Sigmoid colon (tissue), 7 donors: ENCODE measurements at regions of chr12 and their contacts with region 1.

Region 1: DNA sequence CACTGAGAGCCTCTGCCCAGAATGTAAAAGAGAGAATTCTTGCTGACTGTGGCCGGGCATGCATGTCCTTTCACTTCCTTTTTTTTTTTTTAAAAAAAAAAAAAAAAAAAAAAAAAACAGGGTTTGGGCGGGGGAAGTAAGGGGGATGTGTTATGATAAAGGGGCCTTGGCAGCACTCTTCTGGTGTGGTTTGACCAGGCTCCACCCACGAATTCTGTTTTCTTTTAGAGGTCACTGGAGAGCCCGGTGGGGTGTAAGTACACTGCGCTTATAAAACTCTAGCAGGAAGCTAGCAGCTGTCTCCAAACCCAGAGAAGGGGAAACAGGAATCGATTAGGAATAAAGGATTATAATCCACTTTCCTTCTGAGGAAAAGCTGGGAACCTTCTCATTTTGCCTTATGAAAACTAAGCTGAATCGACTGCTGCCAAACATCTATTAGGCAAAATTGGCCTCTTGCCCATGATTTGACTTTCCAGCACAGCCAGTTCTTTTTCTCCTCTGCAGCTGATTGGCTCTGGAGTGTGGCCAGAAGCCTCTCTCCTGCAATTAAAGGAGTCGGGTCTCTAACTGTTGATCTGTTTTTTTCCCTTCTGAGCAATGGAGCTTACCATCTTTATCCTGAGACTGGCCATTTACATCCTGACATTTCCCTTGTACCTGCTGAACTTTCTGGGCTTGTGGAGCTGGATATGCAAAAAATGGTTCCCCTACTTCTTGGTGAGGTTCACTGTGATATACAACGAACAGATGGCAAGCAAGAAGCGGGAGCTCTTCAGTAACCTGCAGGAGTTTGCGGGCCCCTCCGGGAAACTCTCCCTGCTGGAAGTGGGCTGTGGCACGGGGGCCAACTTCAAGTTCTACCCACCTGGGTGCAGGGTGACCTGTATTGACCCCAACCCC is 27.7 kb upstream of the HIGD1C start:
- DNase-seq: peak; percentile 98
- H3K4me3 ChIP-seq: peak overlapping the region; percentile 64 to 80 (median 72)
- H3K27ac ChIP-seq: peak overlapping the region; percentile 87 to 93 (median 90)
- H3K4me1 ChIP-seq: peaks cover 0 to 58% (median 51%) of the 10 kb centered on the region in 4 donors
- H3K27me3 ChIP-seq: no peaks in the 10 kb centered on the region
- CTCF ChIP-seq: no peak
- EP300 ChIP-seq: peak in 3 of 4 donors; percentile 4 to 48 (median 28)
- POLR2A ChIP-seq: peak; percentile 16 to 35

Region 2: GRCh38 chr12:50763639-50764285 is 160.9 kb before region 1 on chr12 and contains the start of gene ATF1:
- intact Hi-C with region 1: loop called (anchors 2 kb)
- DNase-seq: peak; percentile 96
- H3K4me3 ChIP-seq: peak within 1 kb of the TSS; percentile 95 to 99 (median 99)
- H3K27ac ChIP-seq: peak within 1 kb of the TSS; percentile 96 to 100 (median 99)
- H3K4me1 ChIP-seq: peaks cover 0 to 38% (median 33%) of the 10 kb centered on the region in 4 donors
- H3K27me3 ChIP-seq: no peaks in the 10 kb centered on the region
- CTCF ChIP-seq: no peak
- EP300 ChIP-seq: no peak
- POLR2A ChIP-seq: peak; percentile 68 to 71
- total RNA-seq, gene ATF1: 12.6 to 27.6 (median 20.8) TPM

Region 3: GRCh38 chr12:50799908-50800307 is 124.8 kb before region 1 on chr12:
- intact Hi-C with region 1: no loop called
- DNase-seq: no peak
- H3K4me3 ChIP-seq: no peak overlapping the region
- H3K27ac ChIP-seq: no peak overlapping the region
- H3K4me1 ChIP-seq: no peaks in the 10 kb centered on the region
- H3K27me3 ChIP-seq: no peaks in the 10 kb centered on the region
- CTCF ChIP-seq: no peak
- EP300 ChIP-seq: no peak
- POLR2A ChIP-seq: no peak

Region 4: DNA sequence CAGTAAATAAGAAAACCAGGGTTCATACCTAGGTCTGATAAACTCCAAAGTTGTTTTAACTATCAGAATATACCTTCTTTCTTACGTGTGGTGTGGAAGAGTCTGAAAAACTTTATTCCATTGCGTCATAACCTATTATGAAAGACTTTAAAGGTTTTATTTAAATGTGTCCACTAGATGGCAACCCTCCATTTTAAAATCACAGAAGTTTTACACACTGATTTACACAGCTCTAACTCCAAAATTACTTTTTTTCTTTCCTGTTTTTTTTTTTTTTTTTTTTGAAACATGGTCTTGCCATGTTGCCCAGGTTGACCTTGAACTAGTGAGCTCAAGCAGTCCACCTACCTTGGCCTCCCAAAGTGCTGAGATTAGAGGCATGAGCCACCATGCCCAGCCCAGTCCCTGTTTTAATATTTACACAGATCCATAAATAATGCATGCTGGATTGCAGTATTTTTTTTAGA is 99.3 kb before region 1 on chr12:
- intact Hi-C with region 1: loop called (anchors 2 kb)
- DNase-seq: no peak
- H3K4me3 ChIP-seq: no peak overlapping the region
- H3K27ac ChIP-seq: peak overlapping the region; percentile 50 to 71 (median 66)
- H3K4me1 ChIP-seq: peaks cover 0 to 14% (median 9%) of the 10 kb centered on the region in 4 donors
- H3K27me3 ChIP-seq: no peaks in the 10 kb centered on the region
- CTCF ChIP-seq: peak; percentile 38 to 64 (median 49)
- EP300 ChIP-seq: no peak
- POLR2A ChIP-seq: no peak

Region 5: GRCh38 chr12:50986966-50987737 is 62.5 kb after region 1 on chr12:
- intact Hi-C with region 1: loop called (anchors 1 kb)
- DNase-seq: peak; percentile 71
- H3K4me3 ChIP-seq: no peak overlapping the region
- H3K27ac ChIP-seq: peak overlapping the region; percentile 59 to 83 (median 76)
- H3K4me1 ChIP-seq: peaks cover 0 to 33% (median 27%) of the 10 kb centered on the region in 4 donors
- H3K27me3 ChIP-seq: no peaks in the 10 kb centered on the region
- CTCF ChIP-seq: peak; percentile 28 to 64 (median 54)
- EP300 ChIP-seq: no peak
- POLR2A ChIP-seq: no peak

Region 6: GRCh38 chr12:51025836-51026638 is 101.3 kb after region 1 on chr12 and contains the start of gene SLC11A2:
- intact Hi-C with region 1: loop called (anchors 5 kb)
- DNase-seq: peak; percentile 98
- H3K4me3 ChIP-seq: peak within 1 kb of the TSS; percentile 80 to 87 (median 82)
- H3K27ac ChIP-seq: peak within 1 kb of the TSS; percentile 88 to 95 (median 92)
- H3K4me1 ChIP-seq: peaks cover 0 to 39% (median 14%) of the 10 kb centered on the region in 4 donors
- H3K27me3 ChIP-seq: no peaks in the 10 kb centered on the region
- CTCF ChIP-seq: peak in 2 of 4 experiments; percentile 17
- EP300 ChIP-seq: no peak
- POLR2A ChIP-seq: peak; percentile 29 to 58
- total RNA-seq, gene SLC11A2: 25.0 to 44.6 (median 37.1) TPM

Region 7: DNA sequence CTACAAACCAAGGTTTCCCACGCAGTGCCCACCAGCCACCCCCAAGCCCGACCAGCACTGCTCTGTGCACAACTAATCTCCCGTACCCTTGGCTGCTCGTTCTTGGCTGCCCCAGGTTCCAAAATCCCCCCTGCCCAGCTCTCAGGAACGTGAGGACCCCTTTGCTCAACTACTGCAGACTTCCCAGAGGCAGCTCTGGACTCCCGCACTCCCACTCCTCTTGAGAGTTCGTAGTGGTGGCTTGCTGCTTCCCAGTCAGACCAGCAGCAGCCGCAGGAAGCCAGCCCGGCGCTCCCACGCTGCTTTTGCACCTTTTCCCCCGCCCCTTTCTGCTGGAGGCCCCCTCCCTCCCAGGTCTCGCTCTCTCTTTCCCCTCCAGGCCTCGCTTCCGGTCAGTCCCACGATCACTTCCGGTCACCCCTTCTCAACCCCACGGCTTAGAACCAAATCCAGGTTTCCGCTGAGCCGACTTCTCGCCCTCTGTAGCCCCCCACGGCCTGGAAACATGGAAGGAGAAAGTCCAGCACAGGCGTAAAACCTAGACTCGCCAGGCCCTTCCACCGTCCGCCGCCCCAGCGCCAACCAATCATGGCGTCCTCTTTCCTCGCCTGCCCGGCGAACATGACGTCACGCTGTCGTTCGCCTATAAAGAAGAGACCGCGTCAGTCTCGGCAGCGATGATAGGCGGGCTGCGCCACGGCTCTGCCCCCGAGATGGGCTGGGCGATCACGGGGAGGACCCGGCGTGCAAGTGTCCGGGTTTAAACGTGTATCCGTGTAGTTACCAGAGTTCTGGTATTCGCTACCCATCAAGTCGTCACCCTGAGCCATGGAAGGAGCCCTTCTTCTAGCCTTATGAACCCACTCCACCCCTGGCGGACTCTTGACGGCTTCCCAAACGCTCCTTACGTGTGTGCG is 248.1 kb after region 1 on chr12 and contains the start of gene TFCP2:
- intact Hi-C with region 1: loop called (anchors 2 kb)
- DNase-seq: peak; percentile 99
- H3K4me3 ChIP-seq: peak within 1 kb of the TSS; percentile 64 to 86 (median 75)
- H3K27ac ChIP-seq: peak within 1 kb of the TSS; percentile 93 to 98 (median 96)
- H3K4me1 ChIP-seq: peaks cover 0 to 27% (median 18%) of the 10 kb centered on the region in 4 donors
- H3K27me3 ChIP-seq: no peaks in the 10 kb centered on the region
- CTCF ChIP-seq: no peak
- EP300 ChIP-seq: peak in 1 of 4 donors; percentile 13
- POLR2A ChIP-seq: peak; percentile 43 to 62
- total RNA-seq, gene TFCP2: 11.9 to 17.8 (median 13.7) TPM